ENCODE measurements at regions of chr3 and their contacts with region 1.

Region 1: GRCh38 chr3:44439499-44440295 is 37.8 kb downstream of the ZNF445 start:
- DNase-seq: peak; percentile 93 to 98 (median 94)
- ATAC-seq: peak; percentile 91
- H3K4me3 ChIP-seq: peak overlapping the region; percentile 46
- H3K27ac ChIP-seq: peak overlapping the region; percentile 96
- H3K4me1 ChIP-seq: peaks cover 24 to 55% of the 10 kb centered on the region in 2 experiments
- H3K27me3 ChIP-seq: no peaks in the 10 kb centered on the region
- CTCF ChIP-seq: no peak; a peak in 1 of 6 replicates
- EP300 ChIP-seq: peak; percentile 100
- POLR2A ChIP-seq: peak; percentile 98
- RAD21 ChIP-seq: peak in 1 of 2 experiments; percentile 46; a peak in 3 of 4 replicates

Region 2: GRCh38 chr3:44424763-44425162 is 14.9 kb before region 1 on chr3:
- CTCF ChIA-PET with region 1: no interaction called
- POLR2A ChIA-PET with region 1: interaction called, 12 read pairs
- in situ Hi-C with region 1: no loop called
- intact Hi-C with region 1: no loop called
- DNase-seq: no peak
- ATAC-seq: peak; percentile 8; the same call in 2 of the 3 replicates
- H3K4me3 ChIP-seq: no peak overlapping the region
- H3K27ac ChIP-seq: no peak overlapping the region
- H3K4me1 ChIP-seq: peaks cover 1 to 18% of the 10 kb centered on the region in 2 experiments; a peak in 3 of 5 replicates
- H3K27me3 ChIP-seq: no peaks in the 10 kb centered on the region
- CTCF ChIP-seq: no peak
- EP300 ChIP-seq: no peak
- POLR2A ChIP-seq: no peak
- RAD21 ChIP-seq: no peak

Region 3: DNA sequence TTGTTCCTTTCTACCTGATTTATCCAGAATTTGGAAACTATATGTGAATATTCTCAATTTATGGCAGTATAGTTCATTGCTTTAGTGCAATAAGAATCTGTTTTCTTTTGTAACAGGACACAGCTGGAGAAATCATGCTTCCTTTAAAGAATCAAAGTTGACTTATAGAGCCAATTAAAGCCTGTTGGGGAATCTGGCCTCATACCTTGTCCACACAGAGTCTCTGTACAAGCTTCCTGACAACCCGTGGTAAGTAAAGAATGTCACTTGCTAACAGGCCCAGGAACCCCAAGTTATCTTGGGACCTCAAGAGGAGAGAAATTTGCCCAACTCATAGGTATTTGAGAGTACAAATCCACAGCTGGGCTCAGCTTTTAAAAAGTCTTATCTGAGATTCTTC is 27.5 kb after region 1 on chr3:
- CTCF ChIA-PET with region 1: no interaction called
- POLR2A ChIA-PET with region 1: interaction called, 10 read pairs
- in situ Hi-C with region 1: no loop called
- intact Hi-C with region 1: loop called (anchors 1 kb)
- DNase-seq: no peak
- ATAC-seq: no peak
- H3K4me3 ChIP-seq: no peak overlapping the region
- H3K27ac ChIP-seq: peak overlapping the region; percentile 27; the same call in 1 of the 3 replicates
- H3K4me1 ChIP-seq: peaks cover 26 to 40% of the 10 kb centered on the region in 2 experiments
- H3K27me3 ChIP-seq: no peaks in the 10 kb centered on the region
- CTCF ChIP-seq: no peak
- EP300 ChIP-seq: no peak
- POLR2A ChIP-seq: no peak
- RAD21 ChIP-seq: no peak

Region 4: DNA sequence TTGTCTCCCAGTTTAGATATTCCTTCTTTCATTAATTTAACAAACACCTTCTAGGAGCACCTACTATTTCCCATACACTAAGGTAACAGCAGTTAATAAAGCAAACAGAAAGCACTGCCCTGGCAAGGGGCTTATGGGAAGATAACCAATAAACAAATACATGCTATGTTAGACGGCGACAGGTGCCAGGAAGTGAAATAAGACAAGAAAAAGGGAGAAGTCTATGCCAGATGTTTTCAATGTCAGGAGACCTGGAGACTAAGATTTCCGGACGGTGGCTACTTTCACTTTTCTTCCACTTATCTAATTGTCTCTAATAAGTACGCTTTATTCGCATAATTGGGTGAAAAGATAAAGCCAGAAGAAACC is 70.3 kb after region 1 on chr3:
- CTCF ChIA-PET with region 1: no interaction called
- POLR2A ChIA-PET with region 1: interaction called, 9 read pairs
- in situ Hi-C with region 1: no loop called
- intact Hi-C with region 1: loop called (anchors 2 kb)
- DNase-seq: peak; percentile 24 to 38 (median 30)
- ATAC-seq: peak; percentile 17
- H3K4me3 ChIP-seq: peak overlapping the region; percentile 91
- H3K27ac ChIP-seq: peak overlapping the region; percentile 67
- H3K4me1 ChIP-seq: peaks cover 5 to 17% of the 10 kb centered on the region in 2 experiments; a peak in 4 of 5 replicates
- H3K27me3 ChIP-seq: no peaks in the 10 kb centered on the region
- CTCF ChIP-seq: no peak
- EP300 ChIP-seq: no peak
- POLR2A ChIP-seq: no peak
- RAD21 ChIP-seq: no peak

Measured in K562 (cell line).